HEK293T (cell line): ENCODE measurements at regions of chr15 and their contacts with region 1.

Region 1: DNA sequence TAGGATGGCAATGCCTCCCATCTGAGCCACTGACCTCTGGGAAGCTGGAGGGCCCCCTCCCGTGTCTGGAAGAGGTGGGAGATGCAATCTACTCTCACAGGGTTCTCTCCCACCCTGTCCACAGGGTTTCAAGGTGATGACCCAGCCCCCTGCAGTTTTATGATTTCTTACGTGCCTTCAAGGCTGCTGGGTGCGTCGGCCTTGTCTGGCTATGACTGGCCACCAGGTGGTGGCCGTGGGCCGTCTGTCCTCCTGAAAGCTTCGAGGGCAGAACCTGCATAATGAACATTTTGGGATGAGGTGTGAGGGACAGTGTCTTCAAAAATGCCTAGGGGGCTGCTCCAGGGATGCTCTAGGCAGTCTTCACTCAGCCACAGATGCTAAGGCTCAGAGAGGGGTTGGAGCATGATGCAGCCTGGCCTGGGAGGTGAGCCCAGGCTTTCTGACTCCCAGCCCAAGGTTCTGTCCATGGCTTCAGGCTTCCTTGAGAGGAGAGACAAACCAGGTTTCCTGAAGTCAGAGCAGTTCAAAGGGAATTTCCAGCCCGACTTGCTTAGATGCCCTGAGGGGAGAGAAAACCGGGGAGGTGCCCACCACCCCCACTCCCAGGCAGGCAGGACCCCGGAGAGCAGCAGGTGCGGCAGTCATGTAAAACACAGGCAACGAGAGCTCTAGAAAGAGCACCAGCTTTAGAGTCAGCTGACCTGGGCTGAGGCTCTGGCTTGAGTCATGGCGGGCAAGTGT is 18.7 kb downstream of the ISG20 start:
- DNase-seq: peak; percentile 80

Region 2: DNA sequence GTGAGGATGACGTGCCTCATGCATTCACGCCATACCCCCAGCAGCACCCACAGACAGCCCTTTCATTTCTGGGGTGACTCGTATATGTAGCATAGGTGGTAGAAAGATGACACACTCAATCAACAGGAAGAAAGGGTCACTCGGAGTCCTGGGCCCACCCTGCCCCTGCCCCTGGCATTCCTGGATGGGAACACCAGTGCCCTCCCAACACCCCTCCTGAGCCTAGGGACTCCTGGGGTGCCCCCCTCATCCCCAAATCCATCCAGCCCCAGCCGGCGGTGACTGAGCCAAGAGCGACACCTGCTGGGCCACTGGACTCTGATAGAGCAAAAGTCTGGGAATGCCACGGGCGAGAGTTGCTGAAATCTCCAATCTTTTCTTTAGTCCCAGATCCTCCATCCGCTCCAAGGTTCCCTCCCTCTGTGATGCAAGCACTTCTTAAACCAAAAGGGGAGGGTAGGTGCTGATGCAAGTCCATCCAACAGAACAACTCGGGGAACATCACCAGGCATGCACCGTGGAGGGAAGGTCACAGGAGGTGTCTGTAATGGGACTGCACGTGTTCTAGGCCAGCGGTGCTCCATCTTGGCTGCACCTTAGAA is 176.8 kb after region 1 on chr15:
- CTCF ChIA-PET with region 1: interaction called, 17 read pairs
- POLR2A ChIA-PET with region 1: no interaction called
- DNase-seq: peak; percentile 52